Sigmoid colon (tissue), 7 donors: ENCODE measurements at regions of chr14 and their contacts with region 1.

Region 1: GRCh38 chr14:90383075-90383730 is 13.6 kb upstream of the CALM1 start:
- DNase-seq: peak; percentile 100
- H3K4me3 ChIP-seq: peak overlapping the region; percentile 59 to 70 (median 64)
- H3K27ac ChIP-seq: peak overlapping the region; percentile 93 to 99 (median 97)
- H3K4me1 ChIP-seq: peaks cover 0 to 35% (median 33%) of the 10 kb centered on the region in 4 donors
- H3K27me3 ChIP-seq: no peaks in the 10 kb centered on the region
- CTCF ChIP-seq: no peak
- EP300 ChIP-seq: peak in 1 of 4 donors; percentile 21
- POLR2A ChIP-seq: peak; percentile 98

Region 2: DNA sequence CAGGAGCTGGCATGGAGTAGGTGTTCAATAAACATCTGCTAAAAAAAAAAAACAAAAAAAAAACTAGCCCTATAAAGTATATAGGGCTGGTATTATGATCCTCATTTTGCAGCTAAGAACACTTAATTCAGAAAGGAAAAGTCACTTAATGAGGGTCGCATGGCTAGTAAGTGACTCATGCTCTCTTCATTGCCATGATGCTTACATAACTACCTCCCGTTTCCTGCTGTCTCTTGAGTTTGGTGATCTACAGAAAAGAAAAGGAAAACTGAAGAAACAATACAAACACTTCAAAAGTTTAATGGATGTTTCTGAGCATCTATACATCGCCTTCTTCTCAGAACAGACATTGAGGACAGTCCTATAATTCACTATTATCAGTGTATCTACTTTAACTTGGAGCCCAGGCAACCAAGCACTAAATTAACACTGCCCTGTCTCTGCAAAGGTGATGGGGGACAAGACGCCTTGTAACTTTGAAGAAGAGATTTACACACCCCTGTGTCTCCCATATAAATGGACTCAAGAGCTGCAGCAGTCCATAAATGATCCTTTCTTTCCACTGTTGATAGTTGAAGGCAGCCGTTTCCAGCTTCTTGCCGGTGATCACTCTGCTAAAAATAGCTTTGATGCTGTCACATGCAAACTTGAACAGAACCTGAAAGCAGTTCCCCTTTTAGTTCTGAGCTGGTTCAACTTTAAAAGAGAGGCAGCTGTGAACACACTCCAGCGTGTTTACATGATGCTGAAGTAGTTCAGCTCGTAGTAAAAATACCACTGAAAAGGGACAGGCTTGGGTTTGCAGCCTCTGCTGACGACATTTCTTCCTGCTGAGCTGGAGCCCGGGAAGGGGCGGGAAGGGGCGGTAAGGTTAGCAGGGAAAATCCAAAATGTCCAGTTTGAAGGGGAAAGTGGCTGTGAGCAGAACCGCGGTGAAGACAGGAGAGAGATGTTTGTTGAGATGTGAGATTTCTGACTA is 1079.5 kb before region 1 on chr14:
- intact Hi-C with region 1: loop called (anchors 5 kb)
- DNase-seq: peak; percentile 91
- H3K4me3 ChIP-seq: peak overlapping the region; percentile 1 to 28 (median 20)
- H3K27ac ChIP-seq: peak overlapping the region; percentile 87 to 95 (median 90)
- H3K4me1 ChIP-seq: peaks cover 0 to 53% (median 45%) of the 10 kb centered on the region in 4 donors
- H3K27me3 ChIP-seq: no peaks in the 10 kb centered on the region
- CTCF ChIP-seq: no peak
- EP300 ChIP-seq: peak; percentile 81 to 98 (median 86)
- POLR2A ChIP-seq: no peak

Region 3: DNA sequence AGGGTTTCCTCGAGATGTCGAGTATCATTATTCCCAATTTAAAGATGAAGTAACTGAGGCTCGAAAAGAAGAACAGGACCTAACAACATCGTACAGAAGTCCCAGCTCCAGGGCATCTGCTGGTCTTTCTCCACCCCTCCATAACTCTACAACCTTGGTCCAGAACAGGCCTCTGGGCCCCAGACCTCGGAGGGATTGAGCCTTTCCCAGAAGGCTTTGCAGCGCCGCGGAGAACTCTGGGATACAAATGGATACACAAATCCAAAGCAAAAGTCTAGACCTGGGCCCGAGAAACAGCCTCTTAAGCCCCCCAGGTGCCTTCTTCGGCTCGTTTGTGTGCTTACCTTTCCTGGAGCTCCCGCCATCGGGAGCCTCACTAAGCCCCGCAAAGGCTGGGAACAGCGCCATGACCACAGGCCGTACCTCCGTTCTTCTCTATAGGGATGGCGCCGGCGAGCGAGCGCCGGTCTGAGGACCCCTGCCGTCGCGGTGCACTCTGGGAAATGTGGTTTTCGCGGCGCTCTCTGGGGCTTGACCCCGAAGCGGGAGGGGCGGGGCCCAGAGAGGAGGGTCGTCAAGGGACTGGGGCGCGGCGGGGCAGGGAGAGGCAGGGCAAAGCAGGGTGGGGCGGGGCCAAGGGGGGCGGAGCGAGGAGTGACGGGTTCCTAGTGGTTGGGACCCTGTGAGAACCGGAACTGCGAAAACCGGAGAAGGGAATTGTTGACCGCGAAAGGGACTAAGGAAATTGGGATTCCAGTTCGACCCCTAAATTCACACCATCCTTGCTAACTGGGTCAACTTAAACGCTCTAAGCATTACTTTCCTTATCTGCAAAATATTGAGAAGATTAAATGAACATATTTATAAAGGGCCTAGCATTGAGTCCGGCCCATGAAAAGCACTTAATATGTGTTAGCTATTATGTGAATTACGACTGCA is 51.4 kb before region 1 on chr14 and contains the start of gene NRDE2:
- intact Hi-C with region 1: loop called (anchors 1 kb)
- DNase-seq: peak; percentile 99
- H3K4me3 ChIP-seq: peak within 1 kb of the TSS; percentile 50 to 62 (median 58)
- H3K27ac ChIP-seq: peak within 1 kb of the TSS; percentile 77 to 86 (median 82)
- H3K4me1 ChIP-seq: peaks cover 0 to 15% (median 10%) of the 10 kb centered on the region in 4 donors
- H3K27me3 ChIP-seq: no peaks in the 10 kb centered on the region
- CTCF ChIP-seq: no peak
- EP300 ChIP-seq: peak in 2 of 4 donors; percentile 13 to 26
- POLR2A ChIP-seq: no peak
- total RNA-seq, gene NRDE2: 12.5 to 25.2 (median 14.8) TPM

Region 4: DNA sequence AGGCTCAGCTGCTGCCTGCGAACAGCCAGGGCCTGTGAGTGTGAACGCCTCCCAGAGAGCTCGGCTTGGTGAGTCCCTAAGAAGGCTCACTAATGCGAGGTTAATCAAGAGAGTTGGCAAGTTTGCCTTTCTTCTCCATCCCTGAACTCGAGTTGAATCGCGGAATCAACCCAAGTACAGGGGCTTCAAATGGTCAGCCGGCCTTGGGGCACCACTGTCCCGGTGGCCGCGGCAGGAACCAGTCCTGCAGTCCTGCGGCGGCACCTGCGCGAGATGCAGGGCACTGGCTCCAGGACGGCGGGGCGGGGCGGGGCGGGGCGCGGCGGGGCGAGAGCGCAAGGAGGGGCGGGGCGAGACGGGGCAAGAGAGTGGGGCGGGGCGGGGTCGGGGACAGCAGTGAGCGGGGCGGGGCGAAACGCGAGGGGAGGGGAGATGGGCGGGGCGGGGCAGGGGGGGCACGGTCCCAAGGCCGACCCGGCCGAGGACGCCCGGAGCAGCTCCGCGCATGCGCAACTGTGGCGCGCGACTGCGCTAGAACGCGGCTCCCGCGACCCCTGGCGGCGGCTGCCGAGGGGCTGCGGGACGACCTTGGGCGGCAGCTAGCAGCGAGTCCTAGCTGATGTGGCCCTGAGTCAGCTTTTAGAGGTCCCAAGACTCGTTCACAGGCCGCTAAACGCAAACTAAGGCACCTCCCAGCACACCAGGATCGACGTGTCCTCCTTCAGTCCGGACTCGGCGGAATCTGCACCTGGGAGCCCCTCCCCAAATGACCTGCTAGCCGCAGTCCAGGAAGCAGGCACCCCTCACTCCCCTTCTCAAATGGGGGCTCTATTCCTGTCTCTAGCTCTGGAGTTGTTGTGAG is 375.1 kb after region 1 on chr14:
- intact Hi-C with region 1: loop called (anchors 5 kb)
- DNase-seq: peak; percentile 95
- H3K4me3 ChIP-seq: peak overlapping the region; percentile 26 to 50 (median 46)
- H3K27ac ChIP-seq: peak overlapping the region; percentile 90 to 96 (median 92)
- H3K4me1 ChIP-seq: peaks cover 0 to 52% (median 36%) of the 10 kb centered on the region in 4 donors
- H3K27me3 ChIP-seq: no peaks in the 10 kb centered on the region
- CTCF ChIP-seq: peak; percentile 75 to 91 (median 85)
- EP300 ChIP-seq: no peak
- POLR2A ChIP-seq: peak in 1 of 2 donors; percentile 35

Region 5: DNA sequence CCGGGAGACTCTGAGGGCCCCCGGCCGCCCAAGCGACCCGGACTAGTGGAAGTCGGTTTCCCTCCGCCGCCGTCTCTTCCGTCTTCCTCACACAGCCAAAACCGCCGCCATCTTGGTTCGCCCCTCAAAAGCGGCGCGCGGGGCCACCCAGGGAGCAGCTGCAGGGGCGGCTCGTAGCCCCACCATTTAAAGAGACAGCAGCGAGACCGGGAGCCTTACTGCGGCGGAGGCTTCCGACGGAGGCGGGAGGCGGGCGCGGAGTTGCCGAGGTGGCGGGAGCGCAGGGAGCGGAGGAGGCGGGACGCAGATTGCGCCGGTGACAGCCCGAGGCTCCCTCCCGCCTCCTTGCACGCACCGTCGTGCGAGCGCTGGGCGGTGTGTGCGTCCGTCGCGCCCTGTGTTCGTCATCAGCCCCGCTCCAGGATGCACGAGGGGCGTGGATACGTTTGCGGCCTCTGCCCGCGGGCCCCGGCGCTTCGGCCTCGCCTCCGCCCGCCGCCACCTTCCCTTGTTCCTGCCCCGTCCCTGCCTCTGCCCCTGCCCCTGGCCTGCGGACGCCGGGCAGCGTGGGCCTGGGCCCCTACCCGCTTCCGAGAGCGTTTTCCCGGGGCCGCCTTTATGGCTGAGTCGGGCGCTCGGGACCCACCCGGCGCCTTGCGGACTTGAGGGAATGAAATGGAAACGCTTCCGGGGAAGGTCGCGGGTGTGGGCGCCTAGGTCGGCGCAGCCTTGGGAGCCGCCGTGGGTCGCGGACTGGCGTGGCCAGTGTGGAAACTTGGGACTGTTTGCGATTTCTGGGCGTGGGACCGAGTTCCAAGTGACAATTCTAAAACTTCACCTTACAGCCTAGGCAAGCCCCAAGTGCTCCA is 1127.2 kb after region 1 on chr14 and contains the start of gene PPP4R3A:
- intact Hi-C with region 1: loop called (anchors 10 kb)
- DNase-seq: peak; percentile 97
- H3K4me3 ChIP-seq: peak within 1 kb of the TSS; percentile 86 to 100 (median 96)
- H3K27ac ChIP-seq: peak within 1 kb of the TSS; percentile 99 to 100 (median 100)
- H3K4me1 ChIP-seq: peaks cover 0 to 36% (median 30%) of the 10 kb centered on the region in 4 donors
- H3K27me3 ChIP-seq: no peaks in the 10 kb centered on the region
- CTCF ChIP-seq: no peak
- EP300 ChIP-seq: peak in 3 of 4 donors; percentile 22 to 59 (median 46)
- POLR2A ChIP-seq: peak; percentile 68 to 82
- total RNA-seq, gene PPP4R3A: 69.6 to 78.9 (median 75.1) TPM